ENCODE measurements at regions of chr12 and their contacts with region 1.

Region 1: DNA sequence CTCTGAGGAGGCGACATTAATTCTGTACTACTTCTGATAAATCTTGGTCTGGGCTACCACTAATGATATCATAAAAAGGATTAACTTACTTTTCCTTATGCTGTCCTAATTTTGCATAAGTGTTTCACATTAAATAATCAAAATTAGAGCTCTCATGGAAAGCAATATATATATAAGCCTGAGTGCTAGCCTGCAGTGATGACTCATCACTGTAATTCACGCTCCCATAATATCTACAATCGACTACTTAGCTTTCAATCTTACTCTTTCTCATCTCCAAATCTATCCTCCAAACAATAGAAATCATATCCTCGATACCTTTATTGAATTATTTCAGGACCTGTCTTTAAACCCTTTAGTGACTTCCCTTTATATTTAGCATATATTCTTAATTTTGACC is 701.3 kb downstream of the RERGL start:
- DNase-seq: no peak
- ATAC-seq: no peak
- H3K4me3 ChIP-seq: no peak overlapping the region
- H3K27ac ChIP-seq: no peak overlapping the region
- H3K4me1 ChIP-seq: no peaks in the 10 kb centered on the region
- H3K27me3 ChIP-seq: no peaks in the 10 kb centered on the region
- CTCF ChIP-seq: no peak

Region 2: GRCh38 chr12:16586350-16587109 is 802.1 kb before region 1 on chr12:
- CTCF ChIA-PET with region 1: no interaction called
- POLR2A ChIA-PET with region 1: no interaction called
- in situ Hi-C with region 1: no loop called
- intact Hi-C with region 1: no loop called
- DNase-seq: no peak
- ATAC-seq: no peak
- H3K4me3 ChIP-seq: no peak overlapping the region
- H3K27ac ChIP-seq: no peak overlapping the region
- H3K4me1 ChIP-seq: no peaks in the 10 kb centered on the region
- H3K27me3 ChIP-seq: no peaks in the 10 kb centered on the region
- CTCF ChIP-seq: no peak

Region 3: DNA sequence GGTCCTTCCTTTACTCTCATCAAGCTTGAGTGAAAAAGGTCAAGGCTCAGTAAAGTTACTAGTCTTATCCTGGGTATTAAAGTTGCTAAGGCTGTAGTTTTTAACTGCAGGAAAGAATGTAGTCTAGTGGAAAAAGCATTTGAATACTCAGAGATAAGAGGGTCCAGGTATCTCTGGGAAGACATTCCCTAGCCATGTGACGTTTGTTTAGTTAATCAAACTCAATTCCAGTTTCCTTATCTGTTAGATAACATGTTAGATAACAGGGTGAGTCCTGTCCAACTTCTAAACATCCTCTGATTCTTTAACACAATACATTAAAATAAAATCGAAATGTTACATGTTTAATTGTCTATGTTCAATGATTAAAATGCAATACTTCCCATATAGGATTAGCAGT is 62.0 kb before region 1 on chr12:
- CTCF ChIA-PET with region 1: no interaction called
- POLR2A ChIA-PET with region 1: no interaction called
- in situ Hi-C with region 1: no loop called
- intact Hi-C with region 1: no loop called
- DNase-seq: no peak
- ATAC-seq: no peak
- H3K4me3 ChIP-seq: no peak overlapping the region
- H3K27ac ChIP-seq: no peak overlapping the region
- H3K4me1 ChIP-seq: no peaks in the 10 kb centered on the region
- H3K27me3 ChIP-seq: no peaks in the 10 kb centered on the region
- CTCF ChIP-seq: no peak

Region 4: GRCh38 chr12:17416748-17417147 is 28.1 kb after region 1 on chr12:
- CTCF ChIA-PET with region 1: no interaction called
- POLR2A ChIA-PET with region 1: no interaction called
- in situ Hi-C with region 1: no loop called
- intact Hi-C with region 1: loop called (anchors 1 kb)
- DNase-seq: no peak
- ATAC-seq: no peak
- H3K4me3 ChIP-seq: no peak overlapping the region
- H3K27ac ChIP-seq: no peak overlapping the region
- H3K4me1 ChIP-seq: no peaks in the 10 kb centered on the region
- H3K27me3 ChIP-seq: no peaks in the 10 kb centered on the region
- CTCF ChIP-seq: no peak